ENCODE measurements at regions of chr12 and their contacts with region 1.

Region 1: GRCh38 chr12:68317047-68317667 is 15.0 kb downstream of the MDM1 start:
- DNase-seq: no peak
- H3K4me3 ChIP-seq: no peak overlapping the region
- H3K27ac ChIP-seq: no peak overlapping the region
- H3K4me1 ChIP-seq: no peaks in the 10 kb centered on the region
- H3K27me3 ChIP-seq: no peaks in the 10 kb centered on the region
- CTCF ChIP-seq: peak; percentile 49 to 71 (median 69)
- POLR2A ChIP-seq: no peak

Region 2: GRCh38 chr12:67355578-67356379 is 961.4 kb before region 1 on chr12:
- intact Hi-C with region 1: loop called (anchors 10 kb)
- DNase-seq: no peak
- H3K4me3 ChIP-seq: no peak overlapping the region
- H3K27ac ChIP-seq: no peak overlapping the region
- H3K4me1 ChIP-seq: no peaks in the 10 kb centered on the region
- H3K27me3 ChIP-seq: no peaks in the 10 kb centered on the region
- CTCF ChIP-seq: peak in 3 of 4 experiments; percentile 34 to 48 (median 34)
- POLR2A ChIP-seq: no peak

Region 3: GRCh38 chr12:68040450-68041075 is 276.6 kb before region 1 on chr12:
- intact Hi-C with region 1: loop called (anchors 5 kb)
- DNase-seq: peak; percentile 42
- H3K4me3 ChIP-seq: no peak overlapping the region
- H3K27ac ChIP-seq: no peak overlapping the region
- H3K4me1 ChIP-seq: no peaks in the 10 kb centered on the region
- H3K27me3 ChIP-seq: no peaks in the 10 kb centered on the region
- CTCF ChIP-seq: peak in 3 of 4 experiments; percentile 55 to 67 (median 62)
- POLR2A ChIP-seq: no peak

Region 4: GRCh38 chr12:68223083-68223747 is 93.9 kb before region 1 on chr12:
- intact Hi-C with region 1: loop called (anchors 2 kb)
- DNase-seq: peak; percentile 71
- H3K4me3 ChIP-seq: no peak overlapping the region
- H3K27ac ChIP-seq: no peak overlapping the region
- H3K4me1 ChIP-seq: no peaks in the 10 kb centered on the region
- H3K27me3 ChIP-seq: peaks cover 4% of the 10 kb centered on the region
- CTCF ChIP-seq: peak; percentile 33 to 81 (median 72)
- POLR2A ChIP-seq: no peak

Region 5: DNA sequence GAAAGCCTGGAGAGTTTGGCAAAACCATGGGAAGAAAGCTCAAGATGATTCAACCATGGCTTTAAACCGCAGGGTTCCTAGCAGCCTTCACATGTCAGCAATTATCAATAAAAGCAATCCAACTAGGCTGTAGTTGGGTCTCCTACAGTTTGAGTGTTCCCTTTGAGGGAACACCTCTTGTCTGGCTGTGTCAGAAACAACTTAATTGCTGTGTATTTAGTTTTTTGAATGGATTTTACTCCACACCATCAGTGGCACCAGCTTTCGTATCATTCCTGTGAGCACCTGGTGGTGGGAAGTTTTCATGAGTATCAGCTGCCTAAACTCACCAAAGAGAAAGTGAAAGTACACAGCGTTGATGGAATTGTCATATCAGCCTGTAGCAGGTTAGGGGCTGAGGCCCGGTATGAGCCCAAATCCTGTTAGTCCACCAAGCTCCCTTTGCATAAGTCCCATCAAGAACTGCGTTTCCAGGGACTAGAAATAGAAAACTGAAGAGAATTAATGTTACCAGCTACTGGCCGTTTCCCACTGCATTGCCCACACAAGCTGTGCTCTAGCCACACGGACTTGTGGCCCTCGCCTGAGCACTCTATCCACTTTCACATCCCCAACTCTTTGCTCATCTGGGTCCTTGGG is 80.6 kb before region 1 on chr12:
- intact Hi-C with region 1: loop called (anchors 5 kb)
- DNase-seq: no peak
- H3K4me3 ChIP-seq: peak overlapping the region in 1 of 2 donors; percentile 5
- H3K27ac ChIP-seq: no peak overlapping the region
- H3K4me1 ChIP-seq: no peaks in the 10 kb centered on the region
- H3K27me3 ChIP-seq: no peaks in the 10 kb centered on the region
- CTCF ChIP-seq: no peak
- POLR2A ChIP-seq: no peak

Region 6: GRCh38 chr12:68451261-68452077 is 134.3 kb after region 1 on chr12:
- intact Hi-C with region 1: no loop called
- DNase-seq: no peak
- H3K4me3 ChIP-seq: no peak overlapping the region
- H3K27ac ChIP-seq: no peak overlapping the region
- H3K4me1 ChIP-seq: no peaks in the 10 kb centered on the region
- H3K27me3 ChIP-seq: no peaks in the 10 kb centered on the region
- CTCF ChIP-seq: no peak
- POLR2A ChIP-seq: no peak

Region 7: DNA sequence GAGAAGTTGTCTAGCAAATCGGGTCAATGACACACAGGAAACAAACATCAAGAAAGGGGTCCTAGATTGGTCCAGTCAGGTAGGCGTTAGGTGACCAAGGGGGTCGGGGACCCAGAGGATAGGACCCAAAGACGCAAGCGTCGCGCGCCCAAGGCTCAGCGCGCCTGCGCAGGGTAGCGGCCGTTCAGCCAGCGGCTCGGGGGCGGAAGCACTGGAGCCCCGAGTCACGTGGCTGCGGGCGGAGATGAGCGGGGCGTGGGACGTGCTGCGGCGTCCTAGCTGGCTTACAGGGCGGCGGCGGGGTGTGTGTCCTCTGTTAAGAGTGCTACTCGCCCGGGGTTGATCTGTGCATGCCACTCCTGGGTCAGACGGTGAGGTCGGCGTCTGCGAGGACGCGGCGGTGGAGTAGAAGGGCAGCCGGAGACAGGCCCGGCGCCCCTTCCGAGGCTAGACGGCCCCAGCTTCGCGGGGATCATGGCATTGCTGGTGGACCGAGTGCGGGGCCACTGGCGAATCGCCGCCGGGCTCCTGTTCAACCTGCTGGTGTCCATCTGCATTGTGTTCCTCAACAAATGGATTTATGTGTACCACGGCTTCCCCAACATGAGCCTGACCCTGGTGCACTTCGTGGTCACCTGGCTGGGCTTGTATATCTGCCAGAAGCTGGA is 428.9 kb after region 1 on chr12 and contains the start of gene SLC35E3:
- intact Hi-C with region 1: no loop called
- DNase-seq: peak; percentile 90
- H3K4me3 ChIP-seq: peak within 1 kb of the TSS; percentile 58 to 76
- H3K27ac ChIP-seq: peak within 1 kb of the TSS; percentile 69 to 77
- H3K4me1 ChIP-seq: peaks cover 4% of the 10 kb centered on the region
- H3K27me3 ChIP-seq: no peaks in the 10 kb centered on the region
- CTCF ChIP-seq: no peak
- POLR2A ChIP-seq: peak; percentile 77
- total RNA-seq, gene SLC35E3: 8.9 to 10.3 TPM

Measured in prostate gland (tissue), 2 donors.